ENCODE measurements at regions of chr10 and their contacts with region 1.

Region 1: DNA sequence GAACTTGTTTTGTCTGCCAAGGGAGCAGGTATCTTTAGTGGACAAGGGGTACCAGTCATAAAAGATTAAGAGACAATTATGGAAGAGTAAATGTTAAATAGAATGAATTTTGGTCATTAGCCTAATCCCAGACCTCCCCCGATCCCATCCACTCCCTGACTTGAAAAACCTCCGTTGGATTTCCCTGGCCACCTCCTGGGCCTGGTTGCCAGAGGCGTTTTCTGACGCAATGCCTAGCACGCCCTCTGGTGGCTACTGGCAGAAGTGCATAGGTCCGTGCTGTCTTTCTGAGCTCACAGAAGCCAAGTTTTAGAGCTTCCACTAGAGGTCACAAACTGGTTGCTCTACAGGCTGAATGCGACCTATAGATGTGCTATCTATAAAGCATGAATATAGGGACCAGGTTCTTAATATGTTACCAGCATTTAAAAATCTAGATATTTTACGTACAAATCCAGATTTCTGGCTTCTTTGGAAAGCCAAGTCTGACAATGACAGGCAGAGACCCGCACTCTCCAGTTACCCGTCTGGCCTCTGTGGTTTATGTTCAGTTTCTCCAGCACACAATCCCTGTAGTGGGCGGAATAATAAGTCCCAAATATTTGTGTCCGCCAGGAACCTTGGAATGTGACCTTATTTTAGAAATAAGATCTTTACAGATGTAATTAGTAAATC is 39.8 kb downstream of the SPOCK2 start:
- DNase-seq: peak; percentile 95
- H3K4me3 Mint-ChIP-seq: no peak overlapping the region
- H3K27ac Mint-ChIP-seq: no peak overlapping the region
- H3K4me1 Mint-ChIP-seq: peaks cover 4% of the 10 kb centered on the region
- H3K27me3 Mint-ChIP-seq: no peaks in the 10 kb centered on the region

Region 2: GRCh38 chr10:71974489-71975021 is 74.0 kb before region 1 on chr10:
- CTCF ChIA-PET with region 1: interaction called, 15 read pairs
- POLR2A ChIA-PET with region 1: no interaction called
- intact Hi-C with region 1: no loop called
- DNase-seq: peak; percentile 81
- H3K4me3 Mint-ChIP-seq: no peak overlapping the region
- H3K27ac Mint-ChIP-seq: peak overlapping the region; percentile 38
- H3K4me1 Mint-ChIP-seq: peaks cover 23% of the 10 kb centered on the region
- H3K27me3 Mint-ChIP-seq: no peaks in the 10 kb centered on the region

Region 3: DNA sequence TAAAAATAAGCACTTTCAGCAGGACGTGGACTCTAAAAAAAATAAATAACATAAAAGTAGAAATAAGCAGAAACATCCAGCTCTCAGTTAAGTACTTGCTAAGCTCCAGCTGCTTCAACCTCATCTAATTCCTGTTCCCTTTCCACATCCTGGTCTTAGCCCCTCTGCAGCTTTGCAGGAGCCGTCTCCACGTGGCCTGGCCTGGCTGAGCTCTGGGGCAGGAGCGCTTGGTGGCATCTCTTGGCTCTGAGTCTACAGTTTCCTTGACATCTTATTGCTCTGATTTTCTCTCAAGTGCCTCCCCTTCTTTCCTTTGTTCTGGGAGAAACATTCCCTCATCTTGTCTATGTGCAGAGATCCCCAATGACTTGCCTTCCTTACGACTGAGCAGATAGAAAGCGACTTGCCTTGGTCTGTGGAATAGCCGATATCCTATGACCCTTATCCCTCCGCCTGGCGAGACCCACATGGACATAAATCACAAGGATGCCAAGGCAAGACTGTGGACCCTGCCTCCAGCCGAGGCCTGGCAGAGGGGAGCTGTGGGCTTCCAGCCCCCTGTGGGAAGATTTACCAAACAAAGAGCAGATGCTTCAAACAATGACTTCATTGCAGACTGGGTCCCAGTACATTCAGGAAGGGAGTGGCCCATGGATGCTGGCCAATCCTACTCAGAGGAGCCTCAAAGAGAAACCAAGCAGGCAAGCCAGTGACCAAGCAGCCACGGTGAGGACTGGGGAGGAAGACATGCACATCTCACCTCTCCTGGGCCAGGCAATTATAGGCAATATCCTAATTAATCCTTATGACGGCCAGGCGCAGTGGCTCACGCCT is 22.1 kb before region 1 on chr10:
- CTCF ChIA-PET with region 1: interaction called, 13 read pairs
- POLR2A ChIA-PET with region 1: no interaction called
- intact Hi-C with region 1: no loop called
- DNase-seq: no peak
- H3K4me3 Mint-ChIP-seq: no peak overlapping the region
- H3K27ac Mint-ChIP-seq: no peak overlapping the region
- H3K4me1 Mint-ChIP-seq: peaks cover 3% of the 10 kb centered on the region
- H3K27me3 Mint-ChIP-seq: peaks cover 11% of the 10 kb centered on the region

Region 4: GRCh38 chr10:72068901-72069446 is 20.4 kb after region 1 on chr10:
- CTCF ChIA-PET with region 1: interaction called, 20 read pairs
- POLR2A ChIA-PET with region 1: no interaction called
- intact Hi-C with region 1: no loop called
- DNase-seq: no peak
- H3K4me3 Mint-ChIP-seq: no peak overlapping the region
- H3K27ac Mint-ChIP-seq: peak overlapping the region; percentile 53
- H3K4me1 Mint-ChIP-seq: peaks cover 16% of the 10 kb centered on the region
- H3K27me3 Mint-ChIP-seq: no peaks in the 10 kb centered on the region

Region 5: DNA sequence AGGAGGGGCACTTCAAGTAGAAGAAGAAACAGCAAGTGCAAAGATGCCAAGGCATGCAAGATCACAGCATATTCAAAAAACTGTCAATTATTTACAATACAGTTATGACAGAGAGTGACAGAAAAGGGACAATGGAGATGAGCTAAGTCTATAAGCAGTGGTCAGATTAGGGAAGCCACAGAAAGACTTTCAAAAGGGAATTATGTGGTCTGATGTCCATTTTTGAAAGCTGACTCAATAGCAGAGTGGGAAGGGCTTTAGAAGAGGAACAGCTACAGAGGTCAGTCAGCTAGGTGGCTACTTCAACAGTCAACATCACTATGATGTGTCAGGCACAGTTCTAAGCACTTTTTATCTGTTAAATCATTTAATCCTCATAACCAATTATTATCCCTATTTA is 84.9 kb after region 1 on chr10:
- CTCF ChIA-PET with region 1: interaction called, 12 read pairs
- POLR2A ChIA-PET with region 1: no interaction called
- intact Hi-C with region 1: no loop called
- DNase-seq: no peak
- H3K4me3 Mint-ChIP-seq: no peak overlapping the region
- H3K27ac Mint-ChIP-seq: no peak overlapping the region
- H3K4me1 Mint-ChIP-seq: peaks cover 26% of the 10 kb centered on the region
- H3K27me3 Mint-ChIP-seq: no peaks in the 10 kb centered on the region

Region 6: GRCh38 chr10:72204724-72205123 is 156.1 kb after region 1 on chr10:
- CTCF ChIA-PET with region 1: no interaction called
- POLR2A ChIA-PET with region 1: no interaction called
- intact Hi-C with region 1: no loop called
- DNase-seq: no peak
- H3K4me3 Mint-ChIP-seq: no peak overlapping the region
- H3K27ac Mint-ChIP-seq: no peak overlapping the region
- H3K4me1 Mint-ChIP-seq: peaks cover 9% of the 10 kb centered on the region
- H3K27me3 Mint-ChIP-seq: no peaks in the 10 kb centered on the region

Region 7: GRCh38 chr10:72331601-72332422 is 283.2 kb after region 1 on chr10:
- CTCF ChIA-PET with region 1: interaction called, 71 read pairs
- POLR2A ChIA-PET with region 1: interaction called, 4 read pairs
- intact Hi-C with region 1: no loop called
- DNase-seq: peak; percentile 98
- H3K4me3 Mint-ChIP-seq: peak overlapping the region; percentile 63
- H3K27ac Mint-ChIP-seq: peak overlapping the region; percentile 99
- H3K4me1 Mint-ChIP-seq: peaks cover 85% of the 10 kb centered on the region
- H3K27me3 Mint-ChIP-seq: peaks cover 2% of the 10 kb centered on the region